OCI-LY7 (cell line): ENCODE measurements at regions of chr7 and their contacts with region 1.

Region 1: GRCh38 chr7:50281680-50282445 is 22.7 kb upstream of the IKZF1 start:
- DNase-seq: peak; percentile 83
- H3K4me3 ChIP-seq: peak overlapping the region; percentile 55
- H3K27ac ChIP-seq: peak overlapping the region; percentile 91
- H3K4me1 ChIP-seq: peaks cover 42% of the 10 kb centered on the region
- CTCF ChIP-seq: no peak

Region 2: GRCh38 chr7:49564379-49564714 is 717.5 kb before region 1 on chr7:
- CTCF ChIA-PET with region 1: no interaction called
- POLR2A ChIA-PET with region 1: no interaction called
- intact Hi-C with region 1: no loop called
- DNase-seq: no peak
- H3K4me3 ChIP-seq: no peak overlapping the region
- H3K27ac ChIP-seq: no peak overlapping the region
- H3K4me1 ChIP-seq: peaks cover 8% of the 10 kb centered on the region
- CTCF ChIP-seq: no peak

Region 3: DNA sequence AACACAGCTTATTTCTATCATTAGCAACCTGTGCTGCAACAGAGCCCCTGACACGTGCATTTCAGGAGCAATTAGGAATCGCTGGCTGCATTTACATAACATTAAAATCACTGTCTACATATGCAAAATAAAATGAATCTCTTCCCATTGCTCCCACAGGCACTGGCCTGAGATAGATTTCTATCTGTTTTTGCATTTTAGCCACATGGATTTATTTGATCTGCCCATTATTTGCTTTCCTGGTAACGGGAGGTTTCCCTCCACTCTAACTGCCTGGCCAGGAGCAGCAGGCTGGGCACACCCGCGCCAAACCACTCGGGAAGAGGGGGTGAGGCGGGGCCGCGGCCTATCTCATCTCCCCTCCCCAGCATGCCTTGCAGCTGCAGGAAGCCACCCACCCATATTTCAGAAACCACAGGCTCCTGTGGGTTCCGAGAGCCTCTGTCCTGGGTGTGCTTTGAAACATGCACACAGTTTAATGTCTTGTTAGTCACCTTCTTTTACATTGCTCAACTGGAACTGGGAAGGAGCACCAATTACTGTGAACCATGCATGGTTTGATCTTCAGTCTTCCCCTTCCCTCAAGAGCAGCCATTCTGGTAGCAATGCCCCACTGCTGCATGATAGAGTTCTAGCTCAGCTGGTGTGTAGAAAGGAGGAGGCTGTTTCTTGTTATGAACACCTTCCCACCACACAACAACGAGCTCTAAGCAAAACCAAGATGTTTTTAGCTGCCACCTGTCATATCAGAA is 15.1 kb before region 1 on chr7:
- CTCF ChIA-PET with region 1: interaction called, 9 read pairs
- POLR2A ChIA-PET with region 1: interaction called, 57 read pairs
- intact Hi-C with region 1: no loop called
- DNase-seq: peak; percentile 76
- H3K4me3 ChIP-seq: peak overlapping the region; percentile 29
- H3K27ac ChIP-seq: peak overlapping the region; percentile 85
- H3K4me1 ChIP-seq: peaks cover 100% of the 10 kb centered on the region
- CTCF ChIP-seq: no peak

Region 4: GRCh38 chr7:50293509-50294179 is 11.8 kb after region 1 on chr7:
- CTCF ChIA-PET with region 1: no interaction called
- POLR2A ChIA-PET with region 1: interaction called, 26 read pairs
- intact Hi-C with region 1: no loop called
- DNase-seq: no peak
- H3K4me3 ChIP-seq: no peak overlapping the region
- H3K27ac ChIP-seq: no peak overlapping the region
- H3K4me1 ChIP-seq: peaks cover 11% of the 10 kb centered on the region
- CTCF ChIP-seq: no peak

Region 5: DNA sequence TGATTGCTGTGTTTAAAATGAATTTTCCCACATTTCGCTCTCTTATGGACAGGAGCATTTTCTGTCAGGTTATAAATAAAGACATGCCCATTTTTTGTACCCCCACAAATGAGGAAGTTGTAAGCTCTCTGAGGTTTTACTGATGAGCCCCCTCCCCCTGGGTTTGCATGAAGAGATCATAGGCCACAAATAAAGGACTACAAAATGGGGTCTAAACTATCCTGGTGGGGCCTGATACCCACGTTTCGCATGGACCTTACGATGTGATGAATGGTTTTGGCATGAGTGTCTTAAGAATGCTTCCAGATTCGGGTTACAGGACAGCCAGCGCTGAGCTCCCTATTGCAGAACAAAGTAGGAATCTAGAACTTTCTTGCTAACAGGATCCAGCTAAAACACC is 28.5 kb after region 1 on chr7:
- CTCF ChIA-PET with region 1: no interaction called
- POLR2A ChIA-PET with region 1: interaction called, 13 read pairs
- intact Hi-C with region 1: loop called (anchors 1 kb)
- DNase-seq: peak; percentile 78
- H3K4me3 ChIP-seq: peak overlapping the region; percentile 71
- H3K27ac ChIP-seq: peak overlapping the region; percentile 86
- H3K4me1 ChIP-seq: peaks cover 53% of the 10 kb centered on the region
- CTCF ChIP-seq: 0 out of 2 replicates have a peak, but pooled peaks have one; percentile 3

Region 6: DNA sequence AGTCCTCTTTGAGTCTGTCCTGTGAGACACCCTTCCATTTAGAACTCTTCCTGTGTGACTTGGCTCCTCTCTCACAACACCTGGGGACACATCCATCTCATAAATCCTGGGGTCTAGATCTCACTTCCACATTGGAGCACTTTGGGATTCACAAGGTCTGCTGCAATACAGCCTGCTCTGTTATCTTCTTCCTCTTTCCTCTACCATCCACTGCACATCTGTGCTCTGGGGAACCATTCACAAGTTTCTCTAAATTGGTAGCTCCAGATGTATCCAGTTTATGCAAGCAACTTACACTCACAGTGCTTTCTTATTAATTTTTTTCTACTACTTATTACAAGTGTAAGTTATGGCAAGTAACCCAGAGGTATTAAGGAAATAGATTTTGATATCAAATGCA is 173.8 kb after region 1 on chr7:
- CTCF ChIA-PET with region 1: no interaction called
- POLR2A ChIA-PET with region 1: no interaction called
- intact Hi-C with region 1: no loop called
- DNase-seq: no peak
- H3K4me3 ChIP-seq: no peak overlapping the region
- H3K27ac ChIP-seq: no peak overlapping the region
- H3K4me1 ChIP-seq: peaks cover 4% of the 10 kb centered on the region
- CTCF ChIP-seq: no peak